ENCODE measurements at regions of chr5 and their contacts with region 1.

Region 1: GRCh38 chr5:140547508-140548299 is at the start of gene EIF4EBP3:
- DNase-seq: peak; percentile 90
- H3K4me3 Mint-ChIP-seq: peak within 1 kb of the TSS; percentile 77
- H3K27ac Mint-ChIP-seq: peak within 1 kb of the TSS; percentile 97
- H3K4me1 Mint-ChIP-seq: peaks cover 45% of the 10 kb centered on the region
- H3K27me3 Mint-ChIP-seq: no peaks in the 10 kb centered on the region
- total RNA-seq, gene EIF4EBP3: 9.5 to 9.7 TPM

Region 2: DNA sequence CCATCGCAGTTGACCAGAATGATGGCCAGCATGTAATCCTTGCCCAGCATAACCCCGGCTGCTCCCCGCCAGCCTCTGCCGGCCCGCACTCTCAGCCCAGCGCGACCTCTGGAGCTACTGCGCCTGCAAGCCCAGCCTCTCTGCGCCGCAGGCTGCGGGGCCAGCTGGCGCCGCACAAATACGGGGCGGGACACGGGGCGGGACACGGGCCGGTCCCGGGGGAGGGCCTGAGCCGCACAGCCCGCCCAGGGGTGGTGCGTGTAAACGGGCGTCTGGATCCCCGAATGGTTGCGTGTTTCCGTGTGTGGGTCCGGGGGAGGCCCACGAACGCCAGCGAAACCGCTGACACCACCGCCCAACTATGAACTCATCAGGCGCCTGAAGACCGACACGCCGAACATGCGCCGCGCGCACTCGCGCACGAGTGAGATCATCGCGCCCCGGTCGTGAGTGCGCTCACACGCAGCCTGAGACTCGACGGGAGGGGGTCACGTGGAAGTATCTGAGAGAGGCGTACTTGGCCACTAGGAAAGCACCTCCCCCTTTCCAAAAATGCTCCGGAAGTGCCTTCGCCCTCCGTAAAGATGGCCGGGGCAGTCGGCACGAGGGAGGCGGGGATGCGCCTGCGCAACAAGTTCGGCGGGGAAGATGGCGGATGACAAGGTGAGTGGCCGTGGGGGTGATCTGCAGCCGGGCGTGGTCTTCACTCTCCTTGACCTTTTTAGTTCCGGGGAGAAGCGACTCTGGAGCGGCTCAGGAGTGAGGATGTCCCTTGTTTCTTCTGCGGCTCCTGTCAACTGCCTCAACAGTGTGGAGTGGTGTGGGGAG is 16.7 kb after region 1 on chr5 and contains the starts of genes APBB3 and SLC35A4:
- CTCF ChIA-PET with region 1: interaction called, 16 read pairs
- POLR2A ChIA-PET with region 1: no interaction called
- DNase-seq: peak; percentile 99
- H3K4me3 Mint-ChIP-seq: peak within 1 kb of the TSS; percentile 94
- H3K27ac Mint-ChIP-seq: peak within 1 kb of the TSS; percentile 95
- H3K4me1 Mint-ChIP-seq: peaks cover 59% of the 10 kb centered on the region
- H3K27me3 Mint-ChIP-seq: no peaks in the 10 kb centered on the region
- total RNA-seq, gene APBB3: 28.5 to 32.8 TPM
- total RNA-seq, gene SLC35A4: 84.0 to 96.6 TPM

Region 3: GRCh38 chr5:140588311-140589070 is 40.8 kb after region 1 on chr5:
- CTCF ChIA-PET with region 1: no interaction called
- POLR2A ChIA-PET with region 1: no interaction called
- DNase-seq: no peak
- H3K4me3 Mint-ChIP-seq: no peak overlapping the region
- H3K27ac Mint-ChIP-seq: no peak overlapping the region
- H3K4me1 Mint-ChIP-seq: peaks cover 5% of the 10 kb centered on the region
- H3K27me3 Mint-ChIP-seq: peaks cover 9% of the 10 kb centered on the region

Region 4: DNA sequence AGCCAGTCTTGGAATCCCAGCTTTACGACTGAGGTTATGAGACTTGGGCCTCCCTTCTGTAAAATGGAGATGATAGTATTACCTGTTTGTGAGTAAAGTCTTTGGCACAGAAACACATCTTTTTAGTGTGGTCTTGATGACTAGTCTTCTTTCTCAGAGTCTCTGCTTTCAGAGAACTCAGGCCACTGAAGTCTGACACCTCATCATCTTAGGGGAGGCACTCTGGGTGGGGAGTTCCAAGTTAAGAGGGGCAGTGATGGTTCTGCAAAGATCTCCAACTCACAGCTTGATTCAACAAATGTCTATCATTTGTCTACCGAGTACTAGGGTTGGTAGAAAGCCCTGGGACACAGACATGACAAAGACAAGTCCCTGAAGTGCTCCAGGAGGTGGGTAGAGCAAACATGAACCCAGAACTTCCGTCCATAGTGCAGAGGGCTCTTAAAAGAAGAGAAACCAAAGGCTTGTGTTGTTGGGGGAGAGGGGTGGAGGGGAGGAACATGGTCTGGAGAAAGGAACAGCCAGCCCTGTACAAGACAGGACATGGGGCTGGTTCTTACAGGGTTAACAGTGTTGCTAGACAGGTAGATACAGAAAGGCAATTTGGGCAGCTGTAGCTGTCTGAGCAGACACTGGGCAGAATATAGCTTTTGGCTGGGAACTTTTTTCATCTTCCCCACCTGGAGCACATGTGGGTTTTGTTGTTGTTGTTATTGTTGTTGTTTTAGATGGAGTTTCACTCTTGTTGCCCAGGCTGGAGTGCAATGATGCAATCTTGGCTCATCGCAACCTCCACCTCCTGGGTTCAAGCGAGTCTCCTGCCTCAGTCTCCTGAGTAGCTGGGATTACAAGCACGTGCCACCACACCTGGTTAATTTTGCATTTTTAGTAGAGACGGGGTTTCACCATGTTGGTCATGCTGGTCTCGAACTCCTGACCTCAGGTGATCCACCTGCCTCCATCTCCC is 87.9 kb after region 1 on chr5:
- CTCF ChIA-PET with region 1: interaction called, 14 read pairs
- POLR2A ChIA-PET with region 1: interaction called, 3 read pairs
- DNase-seq: no peak
- H3K4me3 Mint-ChIP-seq: no peak overlapping the region
- H3K27ac Mint-ChIP-seq: no peak overlapping the region
- H3K4me1 Mint-ChIP-seq: peaks cover 52% of the 10 kb centered on the region
- H3K27me3 Mint-ChIP-seq: peaks cover 18% of the 10 kb centered on the region

Measured in activated CD4-positive, alpha-beta T cell treated with anti-CD3 and anti-CD28 coated beads, Interleukin-2, amount 10 ng/mL, durations not matched to agents 7 days and 5 days (primary cell).